Transverse colon (tissue), 4 donors: ENCODE measurements at regions of chr16 and their contacts with region 1.

Region 1: GRCh38 chr16:79601931-79602627 is 1.5 kb upstream of the MAF start:
- DNase-seq: peak; percentile 87
- H3K4me3 ChIP-seq: peak overlapping the region; percentile 44 to 82 (median 66)
- H3K27ac ChIP-seq: peak overlapping the region; percentile 83 to 95 (median 93)
- H3K4me1 ChIP-seq: peaks cover 0 to 24% (median 10%) of the 10 kb centered on the region in 4 donors
- H3K27me3 ChIP-seq: peaks cover 19% of the 10 kb centered on the region
- CTCF ChIP-seq: peak; percentile 76 to 84 (median 82)
- EP300 ChIP-seq: no peak
- POLR2A ChIP-seq: no peak

Region 2: DNA sequence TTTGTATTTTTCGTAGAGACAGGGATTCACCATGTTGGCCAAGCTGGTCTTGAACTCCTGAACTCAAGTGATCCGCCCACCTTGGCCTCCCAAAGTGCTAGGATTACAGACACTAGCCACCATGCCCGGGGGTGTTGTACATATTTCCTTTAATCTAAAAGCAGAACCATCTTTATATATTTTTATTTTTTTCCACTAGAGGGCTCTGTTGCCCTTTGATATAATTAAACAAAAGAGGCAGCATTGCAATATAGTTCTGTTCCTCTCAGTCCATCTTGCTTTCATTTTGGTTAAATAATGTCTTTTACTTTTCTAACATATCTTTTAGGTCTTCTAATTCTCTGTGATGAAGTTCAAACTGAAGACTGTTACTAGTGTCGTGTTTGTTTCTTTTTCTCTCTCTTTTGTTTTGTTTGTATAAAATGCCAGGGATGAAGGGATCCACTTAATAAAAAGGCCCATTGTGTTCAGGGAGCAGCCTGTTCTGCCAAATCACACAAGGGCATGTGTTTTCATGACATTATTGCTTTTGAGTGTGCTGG is 1479.2 kb before region 1 on chr16:
- in situ Hi-C with region 1: no loop called
- intact Hi-C with region 1: loop called (anchors 10 kb)
- DNase-seq: no peak
- H3K4me3 ChIP-seq: no peak overlapping the region
- H3K27ac ChIP-seq: peak overlapping the region in 1 of 4 donors; percentile 59
- H3K4me1 ChIP-seq: peaks cover 0 to 23% (median 0%) of the 10 kb centered on the region in 4 donors
- H3K27me3 ChIP-seq: no peaks in the 10 kb centered on the region
- CTCF ChIP-seq: peak; percentile 44 to 67 (median 49)
- EP300 ChIP-seq: no peak
- POLR2A ChIP-seq: no peak

Region 3: DNA sequence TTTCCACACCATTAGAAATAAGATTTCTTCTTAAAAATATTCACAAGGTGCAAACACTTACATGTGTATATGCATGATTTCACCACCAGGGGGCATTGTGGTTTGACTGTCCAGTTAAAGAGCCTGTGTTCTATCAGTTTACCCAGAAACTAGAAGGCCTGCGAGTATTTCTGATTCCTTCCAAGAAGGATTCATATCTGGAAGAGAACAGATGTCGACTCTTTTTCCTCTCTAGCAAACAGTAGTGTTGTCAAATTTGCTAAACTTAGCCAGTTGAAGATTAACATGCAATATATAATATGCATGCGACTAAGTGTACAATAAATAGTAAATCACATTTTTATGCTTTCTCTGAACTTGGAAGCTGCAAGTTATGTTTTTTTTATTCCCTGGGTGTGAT is 1098.5 kb before region 1 on chr16:
- in situ Hi-C with region 1: loop called in 3 of 4 experiments (anchors 10 to 25 kb)
- intact Hi-C with region 1: loop called (anchors 2 kb)
- DNase-seq: peak; percentile 44
- H3K4me3 ChIP-seq: no peak overlapping the region
- H3K27ac ChIP-seq: peak overlapping the region in 1 of 4 donors; percentile 78
- H3K4me1 ChIP-seq: peaks cover 6 to 15% (median 8%) of the 10 kb centered on the region in 4 donors
- H3K27me3 ChIP-seq: no peaks in the 10 kb centered on the region
- CTCF ChIP-seq: peak; percentile 82 to 89 (median 86)
- EP300 ChIP-seq: no peak
- POLR2A ChIP-seq: no peak

Region 4: GRCh38 chr16:78705694-78706093 is 896.4 kb before region 1 on chr16:
- in situ Hi-C with region 1: loop called in 1 of 4 experiments (anchors 25 kb)
- intact Hi-C with region 1: no loop called
- DNase-seq: no peak
- H3K4me3 ChIP-seq: no peak overlapping the region
- H3K27ac ChIP-seq: no peak overlapping the region
- H3K4me1 ChIP-seq: no peaks in the 10 kb centered on the region
- H3K27me3 ChIP-seq: no peaks in the 10 kb centered on the region
- CTCF ChIP-seq: peak; percentile 37 to 72 (median 52)
- EP300 ChIP-seq: no peak
- POLR2A ChIP-seq: no peak

Region 5: GRCh38 chr16:79677799-79678577 is 75.9 kb after region 1 on chr16:
- in situ Hi-C with region 1: no loop called
- intact Hi-C with region 1: no loop called
- DNase-seq: no peak
- H3K4me3 ChIP-seq: no peak overlapping the region
- H3K27ac ChIP-seq: no peak overlapping the region
- H3K4me1 ChIP-seq: no peaks in the 10 kb centered on the region
- H3K27me3 ChIP-seq: no peaks in the 10 kb centered on the region
- CTCF ChIP-seq: no peak
- EP300 ChIP-seq: no peak
- POLR2A ChIP-seq: no peak